Adrenal gland (tissue), 19 donors: ENCODE measurements at regions of chr16 and their contacts with region 1.

Region 1: GRCh38 chr16:87062569-87063442 is 254.4 kb downstream of the C16orf95 start:
- DNase-seq: peak; percentile 49 to 83 (median 71)
- H3K4me3 ChIP-seq: peak overlapping the region in 1 of 4 donors; percentile 33
- H3K27ac ChIP-seq: peak overlapping the region in 2 of 5 donors; percentile 21 to 45
- H3K4me1 ChIP-seq: peaks cover 0 to 2% of the 10 kb centered on the region in 2 donors
- H3K27me3 ChIP-seq: peaks cover 9% of the 10 kb centered on the region
- CTCF ChIP-seq: peak; percentile 45 to 72 (median 66)
- POLR2A ChIP-seq: no peak

Region 2: GRCh38 chr16:86563489-86564345 is 499.1 kb before region 1 on chr16:
- intact Hi-C with region 1: loop called in 1 of 2 experiments (anchors 5 kb)
- DNase-seq: peak; percentile 86 to 98 (median 95)
- H3K4me3 ChIP-seq: peak overlapping the region in 1 of 4 donors; percentile 38
- H3K27ac ChIP-seq: peak overlapping the region in 2 of 5 donors; percentile 37 to 52
- H3K4me1 ChIP-seq: peaks cover 0 to 6% of the 10 kb centered on the region in 2 donors
- H3K27me3 ChIP-seq: peaks cover 50% of the 10 kb centered on the region
- CTCF ChIP-seq: peak; percentile 100
- POLR2A ChIP-seq: no peak

Region 3: GRCh38 chr16:86570558-86571529 is 492.0 kb before region 1 on chr16:
- intact Hi-C with region 1: loop called (anchors 5 kb)
- DNase-seq: no peak
- H3K4me3 ChIP-seq: peak overlapping the region in 1 of 4 donors; percentile 54
- H3K27ac ChIP-seq: peak overlapping the region in 2 of 5 donors; percentile 34 to 67
- H3K4me1 ChIP-seq: no peaks in the 10 kb centered on the region
- H3K27me3 ChIP-seq: peaks cover 69% of the 10 kb centered on the region
- CTCF ChIP-seq: no peak
- POLR2A ChIP-seq: no peak

Region 4: GRCh38 chr16:87278191-87279095 is 215.6 kb after region 1 on chr16:
- intact Hi-C with region 1: loop called in 1 of 2 experiments (anchors 10 kb)
- DNase-seq: peak; percentile 71 to 90 (median 83)
- H3K4me3 ChIP-seq: no peak overlapping the region
- H3K27ac ChIP-seq: no peak overlapping the region
- H3K4me1 ChIP-seq: no peaks in the 10 kb centered on the region
- H3K27me3 ChIP-seq: no peaks in the 10 kb centered on the region
- CTCF ChIP-seq: peak; percentile 74 to 92 (median 85)
- POLR2A ChIP-seq: no peak

Region 5: GRCh38 chr16:87435372-87436224 is 372.8 kb after region 1 on chr16:
- intact Hi-C with region 1: no loop called
- DNase-seq: no peak
- H3K4me3 ChIP-seq: no peak overlapping the region
- H3K27ac ChIP-seq: peak overlapping the region in 4 of 5 donors; percentile 16 to 79 (median 64)
- H3K4me1 ChIP-seq: peaks cover 19 to 43% of the 10 kb centered on the region in 2 donors
- H3K27me3 ChIP-seq: no peaks in the 10 kb centered on the region
- CTCF ChIP-seq: no peak
- POLR2A ChIP-seq: peak in 1 of 2 donors; percentile 17